Heart left ventricle (tissue), 16 donors: ENCODE measurements at regions of chr12 and their contacts with region 1.

Region 1: GRCh38 chr12:113299619-113300237 is 35.2 kb downstream of the SLC8B1 start:
- DNase-seq: peak; percentile 57 to 86 (median 82)
- ATAC-seq: peak; percentile 17 to 75 (median 54)
- H3K4me3 ChIP-seq: no peak overlapping the region
- H3K27ac ChIP-seq: peak overlapping the region; percentile 70 to 91 (median 84)
- H3K4me1 ChIP-seq: peaks cover 0 to 53% (median 31%) of the 10 kb centered on the region in 12 donors
- H3K27me3 ChIP-seq: no peaks in the 10 kb centered on the region
- CTCF ChIP-seq: no peak
- POLR2A ChIP-seq: no peak

Region 2: GRCh38 chr12:113232840-113233585 is 66.7 kb before region 1 on chr12:
- intact Hi-C with region 1: loop called in 2 of 10 experiments (anchors 5 kb)
- DNase-seq: peak; percentile 58 to 75 (median 70)
- ATAC-seq: peak in 3 of 4 donors; percentile 56 to 66 (median 60)
- H3K4me3 ChIP-seq: peak overlapping the region in 1 of 12 donors; percentile 20
- H3K27ac ChIP-seq: peak overlapping the region; percentile 60 to 94 (median 88)
- H3K4me1 ChIP-seq: peaks cover 6 to 99% (median 91%) of the 10 kb centered on the region in 12 donors
- H3K27me3 ChIP-seq: no peaks in the 10 kb centered on the region
- CTCF ChIP-seq: no peak
- POLR2A ChIP-seq: peak in 1 of 2 donors; percentile 24

Region 3: GRCh38 chr12:113252456-113252855 is 47.3 kb before region 1 on chr12:
- intact Hi-C with region 1: no loop called
- DNase-seq: peak; percentile 52 to 86 (median 63)
- ATAC-seq: peak; percentile 73 to 93 (median 77)
- H3K4me3 ChIP-seq: no peak overlapping the region
- H3K27ac ChIP-seq: peak overlapping the region in 11 of 12 donors; percentile 52 to 92 (median 74)
- H3K4me1 ChIP-seq: peaks cover 0 to 39% (median 8%) of the 10 kb centered on the region in 12 donors
- H3K27me3 ChIP-seq: no peaks in the 10 kb centered on the region
- CTCF ChIP-seq: no peak
- POLR2A ChIP-seq: no peak

Region 4: GRCh38 chr12:113413488-113413939 is 113.8 kb after region 1 on chr12:
- intact Hi-C with region 1: no loop called
- DNase-seq: peak in 1 of 5 donors; percentile 51
- ATAC-seq: peak; percentile 43 to 55 (median 50)
- H3K4me3 ChIP-seq: no peak overlapping the region
- H3K27ac ChIP-seq: no peak overlapping the region
- H3K4me1 ChIP-seq: peaks cover 0 to 25% (median 0%) of the 10 kb centered on the region in 12 donors
- H3K27me3 ChIP-seq: peaks cover 0 to 5% (median 0%) of the 10 kb centered on the region in 9 donors
- CTCF ChIP-seq: no peak
- POLR2A ChIP-seq: no peak